Activated CD8-positive, alpha-beta T cell treated with anti-CD3 and anti-CD28 coated beads for 36 hours (primary cell): ENCODE measurements at regions of chr13 and their contacts with region 1.

Region 1: DNA sequence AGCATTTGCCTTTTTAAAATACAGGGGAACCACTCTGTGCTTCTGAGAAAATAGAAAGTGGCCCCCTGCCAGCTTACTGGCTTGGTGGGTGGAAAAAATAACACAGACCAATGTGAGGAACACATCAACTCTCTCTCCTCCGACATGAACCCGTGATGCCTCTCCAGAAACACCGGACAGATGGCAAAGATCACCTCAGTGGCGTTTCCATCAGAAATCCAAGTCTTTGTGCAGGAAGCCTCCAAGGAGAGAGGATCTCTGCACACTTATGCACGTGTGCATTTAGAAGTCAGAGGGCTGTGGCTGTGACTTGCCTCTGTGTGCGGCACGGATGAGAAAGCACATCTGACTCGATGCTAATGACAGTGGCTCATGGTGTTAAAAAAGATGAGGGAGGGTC is 112.3 kb upstream of the KLF12 start:
- DNase-seq: peak; percentile 78
- ATAC-seq: peak; percentile 50
- H3K4me3 Mint-ChIP-seq: peak overlapping the region; percentile 70
- H3K27ac Mint-ChIP-seq: peak overlapping the region; percentile 90
- H3K4me1 Mint-ChIP-seq: peaks cover 88% of the 10 kb centered on the region
- H3K27me3 Mint-ChIP-seq: no peaks in the 10 kb centered on the region
- CTCF ChIP-seq: no peak

Region 2: GRCh38 chr13:73171926-73172325 is 1074.6 kb before region 1 on chr13:
- CTCF ChIA-PET with region 1: no interaction called
- POLR2A ChIA-PET with region 1: no interaction called
- intact Hi-C with region 1: loop called (anchors 10 kb)
- DNase-seq: no peak
- ATAC-seq: no peak
- H3K4me3 Mint-ChIP-seq: no peak overlapping the region
- H3K27ac Mint-ChIP-seq: no peak overlapping the region
- H3K4me1 Mint-ChIP-seq: peaks cover 2% of the 10 kb centered on the region
- H3K27me3 Mint-ChIP-seq: no peaks in the 10 kb centered on the region
- CTCF ChIP-seq: no peak

Region 3: GRCh38 chr13:74280795-74281490 is 34.5 kb after region 1 on chr13:
- CTCF ChIA-PET with region 1: interaction called, 25 read pairs
- POLR2A ChIA-PET with region 1: interaction called, 4 read pairs
- intact Hi-C with region 1: loop called (anchors 5 kb)
- DNase-seq: no peak
- ATAC-seq: peak; percentile 44
- H3K4me3 Mint-ChIP-seq: no peak overlapping the region
- H3K27ac Mint-ChIP-seq: no peak overlapping the region
- H3K4me1 Mint-ChIP-seq: peaks cover 54% of the 10 kb centered on the region
- H3K27me3 Mint-ChIP-seq: no peaks in the 10 kb centered on the region
- CTCF ChIP-seq: no peak